Endothelial cell of umbilical vein (primary cell): ENCODE measurements at regions of chr13 and their contacts with region 1.

Region 1: DNA sequence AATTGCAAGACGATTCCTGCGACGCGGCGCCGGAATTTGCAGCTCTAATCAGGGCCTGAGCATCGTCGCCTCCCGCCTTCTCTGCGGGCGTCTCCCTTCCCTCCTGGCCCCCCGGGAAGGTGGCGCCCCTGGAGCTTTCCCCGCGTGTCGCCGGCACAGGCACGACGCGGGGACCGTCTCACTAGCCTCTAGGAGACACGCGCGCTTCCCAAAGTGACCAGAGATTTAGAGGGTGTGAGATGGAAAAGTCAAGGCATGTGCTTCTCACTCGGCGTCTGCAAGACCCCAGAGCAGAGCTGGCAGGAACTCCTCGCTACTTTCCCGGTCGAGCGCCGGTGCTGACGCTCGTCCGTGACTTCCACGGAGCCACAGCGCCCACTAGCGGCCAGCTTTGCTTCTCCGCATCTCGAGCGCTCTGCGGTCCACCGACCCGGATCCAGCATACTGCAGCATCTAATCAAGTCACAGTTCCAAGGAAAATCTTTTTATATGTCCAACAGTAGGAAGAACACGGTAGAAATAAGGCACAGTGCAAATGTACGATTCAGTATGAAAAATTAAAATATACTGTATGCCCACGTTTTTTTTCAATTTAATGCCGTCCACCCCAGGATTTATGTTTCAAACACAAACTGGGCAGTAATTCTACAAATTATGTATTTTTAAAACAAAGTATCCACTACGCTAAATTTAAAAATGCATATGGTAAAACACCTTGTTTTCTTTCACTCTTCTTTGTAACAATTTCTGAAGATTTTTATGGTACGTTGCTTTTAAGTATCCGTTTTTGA is 977 bp upstream of the EFNB2 start:
- DNase-seq: peak; percentile 94
- H3K4me3 ChIP-seq: peak overlapping the region; percentile 16 to 54 (median 53)
- H3K27ac ChIP-seq: peak overlapping the region; percentile 35
- H3K4me1 ChIP-seq: peaks cover 37% of the 10 kb centered on the region
- H3K27me3 ChIP-seq: no peaks in the 10 kb centered on the region
- CTCF ChIP-seq: peak; percentile 95 to 96
- POLR2A ChIP-seq: no peak

Region 2: DNA sequence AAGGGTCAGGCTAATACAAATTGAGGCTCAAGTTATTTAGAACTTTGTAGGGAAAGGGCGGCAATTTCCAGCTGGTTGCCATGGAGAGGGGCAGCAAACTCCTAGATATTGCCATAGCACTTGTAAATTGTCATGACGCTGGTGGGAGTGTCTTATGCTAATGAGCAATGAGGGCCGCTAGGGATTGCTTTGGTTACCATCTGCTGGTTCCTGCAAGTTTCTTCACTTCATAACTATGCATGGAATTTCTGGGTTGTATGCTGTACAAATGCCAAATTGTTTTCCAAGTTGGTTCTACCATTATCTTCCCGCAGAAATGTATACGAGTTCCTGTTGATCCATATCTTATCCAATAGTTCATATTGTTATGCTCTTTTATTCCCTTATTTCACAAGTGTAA is 1340.4 kb before region 1 on chr13:
- CTCF ChIA-PET with region 1: no interaction called
- POLR2A ChIA-PET with region 1: no interaction called
- dilution Hi-C with region 1: no loop called
- intact Hi-C with region 1: loop called (anchors 1 kb)
- DNase-seq: peak; percentile 88
- H3K4me3 ChIP-seq: no peak overlapping the region
- H3K27ac ChIP-seq: peak overlapping the region; percentile 69
- H3K4me1 ChIP-seq: peaks cover 9% of the 10 kb centered on the region
- H3K27me3 ChIP-seq: no peaks in the 10 kb centered on the region
- CTCF ChIP-seq: no peak
- POLR2A ChIP-seq: no peak

Region 3: GRCh38 chr13:105518086-105518485 is 1018.4 kb before region 1 on chr13:
- CTCF ChIA-PET with region 1: no interaction called
- POLR2A ChIA-PET with region 1: no interaction called
- dilution Hi-C with region 1: no loop called
- intact Hi-C with region 1: loop called (anchors 2 kb)
- DNase-seq: no peak
- H3K4me3 ChIP-seq: no peak overlapping the region
- H3K27ac ChIP-seq: no peak overlapping the region
- H3K4me1 ChIP-seq: peaks cover 4% of the 10 kb centered on the region
- H3K27me3 ChIP-seq: no peaks in the 10 kb centered on the region
- CTCF ChIP-seq: no peak
- POLR2A ChIP-seq: no peak

Region 4: DNA sequence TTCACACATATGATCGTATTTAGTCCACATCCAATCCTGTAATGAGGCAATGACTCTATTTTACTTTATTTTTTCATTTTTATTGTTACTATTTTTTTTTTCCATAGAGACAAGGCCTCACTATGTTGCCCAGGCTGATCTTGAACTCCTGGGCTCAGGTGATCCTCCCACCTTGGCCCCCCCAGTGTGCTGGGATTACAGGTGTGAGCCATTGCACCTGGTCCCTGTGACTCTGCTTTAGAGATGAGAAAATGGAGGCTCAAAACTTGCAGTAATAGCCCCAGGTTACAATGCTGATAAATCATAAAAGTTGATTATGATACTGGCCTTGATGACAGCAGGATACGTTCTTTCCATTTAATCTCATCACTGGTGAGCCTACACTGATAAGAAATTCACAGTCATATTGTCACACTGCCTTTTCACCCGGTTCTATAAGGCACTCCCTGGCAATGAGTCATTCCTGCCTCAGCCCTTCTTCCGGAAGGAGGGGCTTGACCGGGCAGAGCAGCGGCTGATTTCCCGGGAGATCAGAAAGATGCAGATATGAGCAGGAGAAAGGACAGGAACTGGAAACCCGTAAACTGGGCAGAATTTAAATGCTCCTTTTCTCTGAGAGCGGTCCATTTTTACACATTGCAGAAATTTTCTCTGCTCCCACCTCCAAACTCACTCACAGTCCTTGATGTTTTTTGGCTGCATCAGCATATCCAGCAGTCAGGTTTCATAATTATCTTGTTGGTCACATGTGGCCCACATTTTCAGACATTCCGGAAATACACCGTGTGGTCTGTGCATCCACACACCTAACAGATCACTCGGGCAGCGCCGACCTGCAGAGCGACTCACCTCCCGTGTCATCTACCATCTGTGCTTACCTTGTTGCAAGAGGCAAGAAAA is 617.3 kb before region 1 on chr13:
- CTCF ChIA-PET with region 1: no interaction called
- POLR2A ChIA-PET with region 1: no interaction called
- dilution Hi-C with region 1: no loop called
- intact Hi-C with region 1: loop called (anchors 5 kb)
- DNase-seq: peak; percentile 42
- H3K4me3 ChIP-seq: no peak overlapping the region
- H3K27ac ChIP-seq: no peak overlapping the region
- H3K4me1 ChIP-seq: peaks cover 15% of the 10 kb centered on the region
- H3K27me3 ChIP-seq: no peaks in the 10 kb centered on the region
- CTCF ChIP-seq: no peak
- POLR2A ChIP-seq: no peak

Region 5: DNA sequence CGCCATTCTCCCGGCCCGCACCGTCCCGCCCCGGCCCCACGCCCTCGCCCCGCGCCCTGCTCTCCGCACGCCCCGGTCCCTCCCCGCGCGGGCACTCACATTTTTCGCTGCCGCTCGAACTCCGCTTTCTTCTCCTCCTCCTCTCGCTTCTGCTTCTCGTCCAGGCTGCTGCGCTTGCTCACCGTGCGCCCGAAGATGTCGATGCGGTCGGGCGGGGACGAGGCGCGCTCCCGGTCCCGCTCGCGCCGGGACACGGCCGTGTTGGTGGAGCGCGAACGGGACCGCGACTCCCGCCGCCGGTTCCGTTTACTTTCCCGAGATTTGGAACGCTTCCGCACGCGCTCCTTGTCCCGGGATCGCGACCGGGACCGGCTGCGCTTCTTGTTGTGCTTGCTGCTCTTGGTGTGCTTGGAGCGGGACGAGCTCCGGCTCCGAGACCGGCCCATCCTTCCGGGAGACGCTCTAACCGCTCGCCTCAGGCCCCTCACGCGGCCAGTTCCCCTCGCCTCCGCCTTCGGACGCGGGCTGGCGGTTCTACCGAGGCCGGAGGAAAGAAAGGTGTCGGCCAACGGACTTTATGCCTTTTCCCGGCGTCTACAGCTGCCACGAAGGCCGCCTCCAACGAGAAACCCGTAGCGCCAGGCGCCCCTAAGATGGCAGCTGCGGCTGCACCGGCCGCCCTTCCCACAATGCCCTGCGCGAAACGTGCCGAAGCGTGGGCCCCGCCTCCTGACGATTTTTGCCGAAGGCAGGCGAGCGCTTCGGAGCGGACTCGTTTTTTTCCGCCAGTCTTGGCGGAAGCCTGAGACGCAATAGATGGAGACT is 31.2 kb after region 1 on chr13 and contains the start of gene ARGLU1:
- CTCF ChIA-PET with region 1: interaction called, 13 read pairs
- POLR2A ChIA-PET with region 1: interaction called, 5 read pairs
- dilution Hi-C with region 1: no loop called
- intact Hi-C with region 1: loop called (anchors 1 kb)
- DNase-seq: peak; percentile 96
- H3K4me3 ChIP-seq: peak within 1 kb of the TSS; percentile 57 to 98 (median 79)
- H3K27ac ChIP-seq: peak within 1 kb of the TSS; percentile 85
- H3K4me1 ChIP-seq: peaks cover 26% of the 10 kb centered on the region
- H3K27me3 ChIP-seq: no peaks in the 10 kb centered on the region
- CTCF ChIP-seq: no peak
- POLR2A ChIP-seq: peak; percentile 92
- total RNA-seq, gene ARGLU1: 95.7 and 111 TPM in 2 replicates

Region 6: DNA sequence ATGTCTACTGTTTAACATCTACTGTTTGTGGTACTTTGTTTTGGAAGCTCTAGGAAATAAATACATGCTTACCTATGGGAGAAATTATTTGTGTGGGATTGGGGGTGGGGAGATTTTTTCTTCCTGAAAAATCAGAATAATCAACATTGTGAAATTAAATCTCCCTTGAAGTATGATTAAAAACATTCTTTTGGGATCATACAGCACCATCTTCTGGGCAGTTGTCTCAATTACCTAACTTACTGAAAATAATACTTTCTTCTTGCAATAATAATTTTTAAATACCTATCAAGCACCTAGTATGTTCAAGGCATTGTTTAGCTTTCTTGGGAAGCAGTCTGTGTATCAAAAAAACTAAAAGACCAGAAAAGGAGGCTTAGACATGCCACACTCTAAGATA is 608.0 kb after region 1 on chr13:
- CTCF ChIA-PET with region 1: interaction called, 5 read pairs
- POLR2A ChIA-PET with region 1: no interaction called
- dilution Hi-C with region 1: no loop called
- intact Hi-C with region 1: loop called (anchors 5 kb)
- DNase-seq: peak; percentile 60
- H3K4me3 ChIP-seq: no peak overlapping the region
- H3K27ac ChIP-seq: no peak overlapping the region
- H3K4me1 ChIP-seq: no peaks in the 10 kb centered on the region
- H3K27me3 ChIP-seq: peaks cover 0 to 1% of the 10 kb centered on the region in 2 experiments
- CTCF ChIP-seq: peak in 1 of 2 donors; percentile 5
- POLR2A ChIP-seq: no peak